ENCODE measurements at regions of chr1 and their contacts with region 1.

Region 1: DNA sequence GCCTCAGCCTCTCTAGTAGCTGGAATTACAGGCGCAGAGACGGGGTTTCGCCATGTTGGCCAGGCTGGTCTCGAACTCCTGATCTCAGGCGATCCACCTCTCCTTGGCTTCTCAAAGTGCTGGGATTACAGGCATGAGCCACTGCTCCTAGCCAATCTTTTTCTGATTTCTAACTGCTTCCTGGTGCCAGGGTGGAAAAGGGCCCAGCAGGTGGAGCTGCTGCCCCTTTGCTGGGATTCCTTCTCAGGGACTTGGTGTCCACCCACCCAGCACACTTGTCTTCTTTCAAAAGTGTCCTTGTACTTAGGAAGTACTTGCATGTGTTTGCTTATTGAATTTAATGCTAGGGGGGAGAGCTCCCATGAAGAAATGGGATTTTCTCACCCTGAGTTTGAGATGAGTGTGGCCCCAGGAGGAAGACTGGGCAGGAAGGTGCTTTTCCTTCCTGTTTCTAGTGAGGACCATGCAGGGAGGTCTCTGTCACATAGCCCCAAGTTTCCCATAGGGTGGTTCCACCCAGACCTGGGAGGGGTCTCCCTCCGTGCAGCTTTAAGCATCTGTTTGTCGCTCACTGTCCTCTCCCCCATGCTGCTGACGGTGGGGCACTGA is 14.2 kb downstream of the UTP11 start:
- DNase-seq: no peak
- H3K4me3 Mint-ChIP-seq: no peak overlapping the region
- H3K27ac Mint-ChIP-seq: peak overlapping the region; percentile 48
- H3K4me1 Mint-ChIP-seq: peaks cover 59% of the 10 kb centered on the region
- H3K27me3 Mint-ChIP-seq: peaks cover 2% of the 10 kb centered on the region

Region 2: GRCh38 chr1:37479255-37480124 is 547.2 kb before region 1 on chr1:
- intact Hi-C with region 1: loop called (anchors 5 kb)
- DNase-seq: peak; percentile 84
- H3K4me3 Mint-ChIP-seq: peak overlapping the region; percentile 100
- H3K27ac Mint-ChIP-seq: peak overlapping the region; percentile 97
- H3K4me1 Mint-ChIP-seq: peaks cover 42% of the 10 kb centered on the region
- H3K27me3 Mint-ChIP-seq: peaks cover 2% of the 10 kb centered on the region

Region 3: GRCh38 chr1:38046884-38047602 is 20.3 kb after region 1 on chr1:
- intact Hi-C with region 1: loop called (anchors 1 kb)
- DNase-seq: peak; percentile 60
- H3K4me3 Mint-ChIP-seq: peak overlapping the region; percentile 84
- H3K27ac Mint-ChIP-seq: no peak overlapping the region
- H3K4me1 Mint-ChIP-seq: no peaks in the 10 kb centered on the region
- H3K27me3 Mint-ChIP-seq: peaks cover 43% of the 10 kb centered on the region

Region 4: DNA sequence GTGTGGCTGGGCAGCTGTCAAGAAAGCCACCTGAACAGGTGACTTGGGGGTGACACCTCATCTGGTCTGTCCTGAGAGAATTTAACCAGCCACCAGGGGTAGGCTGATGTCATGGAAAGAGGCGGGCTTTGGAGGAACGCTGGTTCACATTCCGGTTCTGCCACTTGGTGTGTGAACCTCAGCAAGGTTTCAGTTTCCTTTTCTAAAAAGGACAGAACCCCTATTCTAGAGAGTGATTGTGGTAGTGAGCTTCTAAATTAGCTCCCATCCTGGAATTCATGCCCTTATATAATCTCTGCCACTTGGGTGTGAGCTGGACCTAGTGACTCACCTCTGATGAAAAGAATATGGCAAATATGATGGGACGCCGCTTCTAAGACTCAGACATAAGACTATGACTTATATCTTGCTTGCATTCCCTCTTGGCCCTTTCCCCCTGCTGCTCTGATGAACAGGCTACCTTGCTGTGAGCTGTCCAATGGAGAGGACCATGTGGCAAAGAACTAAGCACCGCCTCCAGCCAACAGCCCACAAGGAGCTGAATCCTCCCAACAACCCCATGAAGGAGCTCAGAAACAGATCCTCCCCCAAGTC is 500.8 kb after region 1 on chr1:
- intact Hi-C with region 1: loop called (anchors 1 kb)
- DNase-seq: peak; percentile 71
- H3K4me3 Mint-ChIP-seq: peak overlapping the region; percentile 13
- H3K27ac Mint-ChIP-seq: peak overlapping the region; percentile 54
- H3K4me1 Mint-ChIP-seq: peaks cover 18% of the 10 kb centered on the region
- H3K27me3 Mint-ChIP-seq: peaks cover 9% of the 10 kb centered on the region

Region 5: GRCh38 chr1:38559161-38559824 is 532.6 kb after region 1 on chr1:
- intact Hi-C with region 1: loop called (anchors 5 kb)
- DNase-seq: peak; percentile 88
- H3K4me3 Mint-ChIP-seq: peak overlapping the region; percentile 70
- H3K27ac Mint-ChIP-seq: peak overlapping the region; percentile 92
- H3K4me1 Mint-ChIP-seq: peaks cover 69% of the 10 kb centered on the region
- H3K27me3 Mint-ChIP-seq: peaks cover 40% of the 10 kb centered on the region

Region 6: DNA sequence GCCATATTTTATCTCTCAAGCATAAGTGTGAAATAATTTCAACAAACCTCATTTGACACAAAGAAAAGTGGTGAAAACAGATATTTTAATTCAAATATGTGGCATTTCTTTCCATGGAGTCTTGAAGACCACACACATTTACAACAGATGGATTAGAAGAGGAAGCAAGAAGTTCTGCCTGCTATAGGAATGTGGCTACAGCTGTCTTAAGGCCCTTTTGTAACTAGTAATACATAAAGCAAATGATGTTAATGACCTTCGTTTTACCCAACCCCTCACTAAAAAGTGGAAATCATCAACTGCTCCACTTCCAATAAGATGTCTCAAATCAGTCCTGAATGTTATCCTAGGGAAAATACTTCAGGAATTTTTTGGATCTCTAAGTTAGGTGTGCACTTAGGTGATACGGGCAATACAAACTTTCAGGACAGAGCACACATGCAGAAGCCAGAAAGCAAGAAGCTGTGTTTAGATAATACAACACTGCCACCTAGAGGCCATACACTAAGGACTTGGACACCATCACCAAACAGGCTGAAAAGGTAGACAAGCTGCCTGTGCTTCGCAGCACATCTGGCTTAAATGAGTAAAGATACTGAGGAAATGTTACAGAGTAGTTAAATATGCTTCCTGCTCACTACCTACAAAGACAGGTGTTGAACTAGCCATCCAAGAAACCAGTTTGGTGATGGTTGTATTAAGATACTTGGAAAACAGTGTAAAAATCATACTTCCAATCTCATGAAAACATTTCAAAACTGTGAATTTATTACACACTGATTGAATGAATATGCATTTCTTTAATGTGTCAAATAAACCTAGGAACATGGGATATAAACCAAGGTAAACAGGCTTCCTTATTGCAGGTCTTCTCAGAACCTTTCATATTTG is 808.5 kb after region 1 on chr1:
- intact Hi-C with region 1: loop called (anchors 1 kb)
- DNase-seq: peak; percentile 34
- H3K4me3 Mint-ChIP-seq: no peak overlapping the region
- H3K27ac Mint-ChIP-seq: no peak overlapping the region
- H3K4me1 Mint-ChIP-seq: peaks cover 7% of the 10 kb centered on the region
- H3K27me3 Mint-ChIP-seq: peaks cover 16% of the 10 kb centered on the region

Region 7: DNA sequence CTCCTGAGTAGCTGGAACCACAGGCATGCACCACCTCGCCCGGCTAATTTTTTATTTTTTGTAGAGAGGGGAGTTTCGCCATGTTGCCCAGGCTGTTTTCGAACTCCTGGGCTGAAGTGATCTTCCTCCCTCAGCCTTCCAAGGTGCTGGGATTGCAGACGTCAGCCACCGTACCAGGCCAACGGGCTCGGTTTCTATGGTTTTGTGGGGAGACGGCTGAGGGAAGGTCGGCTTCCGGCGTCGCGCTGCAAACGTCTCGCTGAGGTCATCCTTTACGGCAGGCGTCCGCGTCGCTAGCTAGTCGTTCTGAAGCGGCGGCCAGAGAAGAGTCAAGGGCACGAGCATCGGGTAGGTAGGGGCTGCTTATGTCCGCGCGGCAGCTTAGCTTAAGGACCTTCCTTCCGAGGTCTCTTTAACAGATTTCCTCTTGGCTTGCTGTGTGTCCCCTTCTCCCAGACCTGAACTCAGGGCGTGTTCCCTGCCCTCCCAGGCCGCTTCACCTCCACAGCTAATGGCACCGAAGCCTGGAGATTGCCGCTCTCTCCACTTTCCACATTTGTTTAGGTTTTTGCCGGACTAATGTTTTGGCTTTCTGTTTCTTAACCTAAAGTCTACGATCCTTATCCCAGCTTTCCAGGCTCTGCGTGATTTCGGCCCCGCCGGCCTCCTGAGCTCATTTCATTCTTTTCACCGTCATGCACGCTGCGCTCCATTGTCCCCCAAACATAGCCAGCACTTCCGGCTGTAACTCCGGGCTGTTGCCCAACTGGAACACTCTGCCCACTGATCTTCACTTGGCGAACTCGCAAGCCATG is 999.6 kb after region 1 on chr1 and contains the start of gene NDUFS5:
- intact Hi-C with region 1: loop called (anchors 5 kb)
- DNase-seq: peak; percentile 78
- H3K4me3 Mint-ChIP-seq: peak within 1 kb of the TSS; percentile 96
- H3K27ac Mint-ChIP-seq: peak within 1 kb of the TSS; percentile 100
- H3K4me1 Mint-ChIP-seq: peaks cover 16% of the 10 kb centered on the region
- H3K27me3 Mint-ChIP-seq: peaks cover 4% of the 10 kb centered on the region
- total RNA-seq, gene NDUFS5: 143 and 150 TPM in 2 replicates

Measured in activated T-helper 1 cell treated with anti-CD3 and anti-CD28 coated beads, Interleukin-12 subunit alpha, Interleukin-12 subunit beta, Interleukin-2, Interleukin-4 antibody, amounts not matched to agents 30 ng/mL and 10 ng/mL and 1 ng/mL, durations not matched to agents 14 hours and 24 hours and 36 hours (primary cell).